ENCODE measurements at regions of chr5 and their contacts with region 1.

Region 1: GRCh38 chr5:139403787-139404483 is at the start of gene SPATA24:
- DNase-seq: peak; percentile 94 to 99
- H3K4me3 ChIP-seq: peak within 1 kb of the TSS; percentile 61 to 62
- H3K27ac ChIP-seq: peak within 1 kb of the TSS; percentile 88 to 90
- H3K4me1 ChIP-seq: peaks cover 0 to 10% of the 10 kb centered on the region in 2 donors
- H3K27me3 ChIP-seq: no peaks in the 10 kb centered on the region
- CTCF ChIP-seq: no peak
- total RNA-seq, gene SPATA24: not detected

Region 2: DNA sequence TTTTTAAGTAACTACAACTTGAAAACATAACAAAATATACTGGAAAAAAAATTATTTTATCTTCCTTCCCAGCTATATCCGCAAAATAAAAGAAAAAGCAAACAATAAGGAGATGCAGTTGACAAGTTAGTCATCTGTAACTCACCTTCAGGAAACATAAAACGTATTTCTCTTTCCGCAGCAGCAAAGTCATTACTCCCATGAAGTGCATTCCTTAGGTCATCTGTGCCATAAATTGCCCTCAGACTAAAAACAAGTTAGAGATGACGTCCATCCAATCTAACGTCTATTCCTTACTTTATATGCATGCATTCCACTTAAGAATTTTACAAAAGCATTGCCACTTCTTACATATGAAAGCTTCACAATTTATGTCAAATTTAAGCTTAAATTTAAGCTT is 1275.6 kb before region 1 on chr5:
- intact Hi-C with region 1: no loop called
- DNase-seq: no peak
- H3K4me3 ChIP-seq: no peak overlapping the region
- H3K27ac ChIP-seq: no peak overlapping the region
- H3K4me1 ChIP-seq: no peaks in the 10 kb centered on the region
- H3K27me3 ChIP-seq: no peaks in the 10 kb centered on the region
- CTCF ChIP-seq: no peak

Region 3: GRCh38 chr5:139341650-139342422 is 62.1 kb before region 1 on chr5 and contains the start of gene PAIP2:
- intact Hi-C with region 1: loop called (anchors 5 kb)
- DNase-seq: peak; percentile 88 to 99
- H3K4me3 ChIP-seq: peak within 1 kb of the TSS; percentile 71 to 97
- H3K27ac ChIP-seq: peak within 1 kb of the TSS; percentile 90 to 99
- H3K4me1 ChIP-seq: peaks cover 5 to 19% of the 10 kb centered on the region in 2 donors
- H3K27me3 ChIP-seq: no peaks in the 10 kb centered on the region
- CTCF ChIP-seq: peak; percentile 78 to 85 (median 84)
- total RNA-seq, gene PAIP2: 27.6 TPM

Region 4: DNA sequence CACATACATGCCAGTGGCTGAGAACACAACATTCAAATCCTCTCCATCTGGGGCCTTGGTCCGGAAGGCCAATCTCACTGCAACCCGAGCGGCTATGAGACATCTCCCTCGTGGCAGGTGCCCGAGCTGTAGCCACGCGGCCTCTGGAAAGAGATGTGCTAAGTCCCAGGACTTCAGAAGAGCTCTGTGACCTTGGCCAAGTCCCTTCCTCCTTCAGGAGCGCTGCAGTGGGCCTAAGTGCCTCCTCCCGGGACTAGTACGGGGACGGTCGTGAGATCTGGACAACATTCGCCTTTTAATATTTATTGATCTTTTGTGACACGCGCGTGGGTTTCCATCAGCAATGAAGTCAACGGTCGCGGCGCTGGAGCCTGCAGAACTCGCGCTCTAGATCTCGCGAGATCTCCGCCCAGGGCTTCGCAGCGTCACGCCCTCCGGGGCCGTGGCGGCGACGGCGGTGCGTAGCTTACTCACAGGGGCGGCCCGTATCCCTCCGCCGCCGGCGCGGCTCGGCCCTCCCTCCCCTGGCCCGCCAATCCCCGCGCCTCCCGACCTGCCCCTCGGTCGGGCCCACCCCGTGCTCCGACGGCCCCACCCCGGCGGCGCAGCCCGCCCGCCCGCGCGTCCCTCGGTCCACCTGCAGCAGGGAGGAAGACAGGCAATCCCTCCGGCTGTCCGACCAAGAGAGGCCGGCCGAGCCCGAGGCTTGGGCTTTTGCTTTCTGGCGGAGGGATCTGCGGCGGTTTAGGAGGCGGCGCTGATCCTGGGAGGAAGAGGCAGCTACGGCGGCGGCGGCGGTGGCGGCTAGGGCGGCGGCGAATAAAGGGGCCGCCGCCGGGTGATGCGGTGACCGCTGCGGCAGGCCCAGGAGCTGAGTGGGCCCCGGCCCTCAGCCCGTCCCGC is 157.1 kb after region 1 on chr5 and contains the start of gene UBE2D2:
- intact Hi-C with region 1: loop called (anchors 1 kb)
- DNase-seq: peak; percentile 78 to 98
- H3K4me3 ChIP-seq: peak within 1 kb of the TSS; percentile 86 to 91
- H3K27ac ChIP-seq: peak within 1 kb of the TSS; percentile 96 to 99
- H3K4me1 ChIP-seq: peaks cover 14 to 38% of the 10 kb centered on the region in 2 donors
- H3K27me3 ChIP-seq: no peaks in the 10 kb centered on the region
- CTCF ChIP-seq: no peak
- total RNA-seq, gene UBE2D2: 65.9 TPM

Region 5: DNA sequence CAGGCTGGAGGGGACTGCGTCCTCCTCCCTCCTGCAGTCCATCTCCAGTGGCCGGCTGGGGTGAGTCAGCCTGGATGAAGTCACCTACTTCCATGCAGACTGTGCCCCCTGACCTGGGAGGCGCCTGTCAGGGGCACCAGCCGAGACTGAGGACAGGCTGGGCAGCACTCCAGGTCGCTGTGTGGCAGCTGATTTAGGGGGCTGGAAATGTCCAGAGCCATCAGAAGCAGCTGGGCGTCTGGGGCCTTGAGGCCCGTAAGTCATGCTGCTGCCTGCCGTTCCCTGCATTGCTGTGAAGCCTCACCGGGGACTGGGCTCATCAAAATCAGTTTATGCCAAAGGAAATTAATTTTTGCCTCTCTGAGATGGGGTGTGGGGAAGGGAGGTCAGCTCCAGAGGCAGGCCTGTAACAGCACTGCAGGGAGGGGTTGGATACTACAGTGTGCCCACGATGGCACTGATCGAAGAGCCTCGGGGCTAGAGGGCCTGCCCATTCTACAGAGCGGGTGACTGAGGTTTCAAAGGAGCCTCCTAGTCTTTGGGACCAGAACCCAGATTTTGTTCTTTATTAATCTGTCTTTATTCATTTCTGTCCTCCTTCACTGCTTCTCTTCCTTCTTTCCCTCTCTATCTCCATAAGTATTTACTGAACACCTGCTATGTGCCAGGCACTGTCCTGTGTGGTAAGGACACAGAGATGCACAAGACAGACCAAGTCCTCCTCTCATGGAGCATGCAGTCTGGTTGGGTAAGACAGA is 321.3 kb after region 1 on chr5:
- intact Hi-C with region 1: no loop called
- DNase-seq: no peak
- H3K4me3 ChIP-seq: no peak overlapping the region
- H3K27ac ChIP-seq: no peak overlapping the region
- H3K4me1 ChIP-seq: peaks cover 0 to 5% of the 10 kb centered on the region in 2 donors
- H3K27me3 ChIP-seq: no peaks in the 10 kb centered on the region
- CTCF ChIP-seq: no peak